Prostate gland (tissue), 2 donors: ENCODE measurements at regions of chr10 and their contacts with region 1.

Region 1: DNA sequence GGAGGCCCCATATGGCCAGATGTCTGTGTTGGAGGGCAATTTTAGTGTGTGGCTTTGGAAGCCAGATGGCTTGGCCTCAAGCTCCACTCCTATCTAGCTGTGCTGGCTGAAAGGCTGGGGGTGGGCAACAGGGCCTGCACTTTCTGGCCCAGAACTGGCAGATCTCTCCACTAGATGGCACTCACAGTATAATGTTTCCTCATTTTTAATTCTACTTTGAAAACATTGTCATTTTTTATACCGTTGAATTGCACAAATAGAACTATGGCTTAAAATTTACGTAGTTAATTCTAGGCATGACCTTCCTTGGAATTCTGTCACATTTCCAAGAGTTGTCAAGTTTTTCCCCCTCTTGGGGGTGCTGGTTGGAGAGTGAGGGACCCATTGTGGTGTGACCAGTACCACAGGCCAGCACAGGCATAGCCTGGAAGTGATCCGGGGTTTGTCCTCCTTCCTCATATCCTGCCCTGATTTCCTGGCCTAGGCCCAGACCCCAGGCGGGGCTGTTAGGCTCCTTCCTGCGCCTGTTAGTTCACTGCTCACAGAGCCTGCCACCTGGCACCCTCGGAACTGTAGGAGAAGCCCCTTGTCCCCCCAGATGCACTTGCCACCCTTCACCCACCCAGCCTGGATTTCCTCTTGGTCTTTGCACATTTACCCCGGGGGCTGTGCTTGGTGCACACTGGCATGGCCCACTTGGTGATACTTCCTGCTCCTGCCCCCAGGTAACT is 52.8 kb downstream of the ARHGAP22 start:
- DNase-seq: no peak
- H3K4me3 ChIP-seq: no peak overlapping the region
- H3K27ac ChIP-seq: no peak overlapping the region
- H3K4me1 ChIP-seq: no peaks in the 10 kb centered on the region
- H3K27me3 ChIP-seq: no peaks in the 10 kb centered on the region
- CTCF ChIP-seq: peak in 2 of 4 experiments; percentile 57 to 65
- POLR2A ChIP-seq: no peak

Region 2: DNA sequence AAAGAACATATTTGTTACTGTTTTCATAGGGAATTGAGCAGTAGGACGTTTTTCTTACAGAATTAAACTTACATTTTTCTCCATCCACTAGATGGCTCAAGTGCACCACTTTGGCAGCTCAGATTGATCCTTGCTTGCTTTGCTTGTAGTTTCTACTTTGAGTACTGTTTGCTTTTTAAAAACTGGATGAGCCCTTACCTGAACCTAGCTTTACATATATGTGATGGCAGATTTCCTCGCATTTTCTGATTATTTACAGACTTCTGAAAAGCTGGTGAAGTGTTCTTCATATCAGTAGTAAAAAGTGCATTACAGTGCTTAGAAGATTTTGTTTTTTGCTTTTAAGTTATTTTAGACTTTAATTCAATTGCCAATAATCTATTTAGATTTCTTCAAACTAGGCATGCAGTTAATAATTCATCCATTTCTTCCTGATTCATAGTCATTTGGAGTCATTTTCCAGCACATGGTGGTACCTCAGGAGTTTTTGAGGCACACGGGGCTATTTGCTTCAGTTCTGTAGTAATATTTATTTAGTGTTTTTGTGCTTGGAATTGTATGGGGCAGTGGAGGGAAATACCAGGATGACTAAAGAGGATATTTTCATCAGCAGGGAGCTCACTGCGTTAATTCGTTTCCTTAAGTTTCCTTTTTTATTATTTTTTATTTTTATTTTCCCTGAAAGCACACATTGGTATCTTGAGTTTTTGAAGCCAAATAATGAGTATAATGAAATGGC is 188.2 kb before region 1 on chr10:
- intact Hi-C with region 1: loop called (anchors 10 kb)
- DNase-seq: peak; percentile 32
- H3K4me3 ChIP-seq: no peak overlapping the region
- H3K27ac ChIP-seq: no peak overlapping the region
- H3K4me1 ChIP-seq: no peaks in the 10 kb centered on the region
- H3K27me3 ChIP-seq: no peaks in the 10 kb centered on the region
- CTCF ChIP-seq: peak in 3 of 4 experiments; percentile 60 to 84 (median 73)
- POLR2A ChIP-seq: no peak